ENCODE measurements at regions of chr2 and their contacts with region 1.

Region 1: GRCh38 chr2:121363632-121364420 is 78.8 kb upstream of the TFCP2L1 start:
- DNase-seq: no peak
- H3K4me3 ChIP-seq: no peak overlapping the region
- H3K27ac ChIP-seq: no peak overlapping the region
- H3K4me1 ChIP-seq: no peaks in the 10 kb centered on the region
- H3K27me3 ChIP-seq: no peaks in the 10 kb centered on the region
- CTCF ChIP-seq: no peak
- EP300 ChIP-seq: no peak
- POLR2A ChIP-seq: no peak
- RAD21 ChIP-seq: no peak

Region 2: GRCh38 chr2:121350890-121351289 is 12.9 kb before region 1 on chr2:
- CTCF ChIA-PET with region 1: interaction called, 26 read pairs
- POLR2A ChIA-PET with region 1: no interaction called
- DNase-seq: no peak
- H3K4me3 ChIP-seq: no peak overlapping the region
- H3K27ac ChIP-seq: no peak overlapping the region
- H3K4me1 ChIP-seq: no peaks in the 10 kb centered on the region
- H3K27me3 ChIP-seq: no peaks in the 10 kb centered on the region
- CTCF ChIP-seq: no peak
- EP300 ChIP-seq: no peak
- POLR2A ChIP-seq: no peak
- RAD21 ChIP-seq: no peak

Measured in H1 (cell line).